ENCODE measurements at regions of chr9 and their contacts with region 1.

Region 1: GRCh38 chr9:122464633-122465567 is 12.8 kb downstream of the OR1J1 start:
- DNase-seq: no peak
- ATAC-seq: peak; percentile 72

Region 2: DNA sequence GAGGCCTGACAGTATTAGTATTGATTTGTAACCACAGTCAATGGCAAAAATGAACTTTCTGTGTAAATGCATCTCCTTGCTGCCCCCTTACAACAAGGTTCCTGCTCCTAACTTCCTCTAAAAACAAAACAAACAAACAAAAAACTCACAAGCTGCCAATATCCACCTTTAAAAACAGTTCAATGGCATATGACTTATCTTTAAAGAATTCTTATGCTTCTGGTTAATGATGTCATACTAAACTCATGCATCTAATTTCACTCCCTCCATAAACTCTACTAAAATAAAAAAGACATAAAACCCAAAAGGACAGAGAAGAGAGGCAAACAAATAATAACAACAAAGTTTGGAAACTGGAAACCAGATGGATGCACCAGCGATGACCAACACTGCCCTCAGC is 71.2 kb after region 1 on chr9:
- intact Hi-C with region 1: no loop called
- DNase-seq: no peak
- ATAC-seq: no peak

Region 3: GRCh38 chr9:122810306-122810946 is 345.5 kb after region 1 on chr9:
- intact Hi-C with region 1: loop called (anchors 2 kb)
- DNase-seq: no peak
- ATAC-seq: peak; percentile 85

Region 4: GRCh38 chr9:122991370-122991830 is 526.5 kb after region 1 on chr9:
- intact Hi-C with region 1: loop called (anchors 10 kb)
- DNase-seq: no peak
- ATAC-seq: no peak